ENCODE measurements at regions of chr12 and their contacts with region 1.

Region 1: DNA sequence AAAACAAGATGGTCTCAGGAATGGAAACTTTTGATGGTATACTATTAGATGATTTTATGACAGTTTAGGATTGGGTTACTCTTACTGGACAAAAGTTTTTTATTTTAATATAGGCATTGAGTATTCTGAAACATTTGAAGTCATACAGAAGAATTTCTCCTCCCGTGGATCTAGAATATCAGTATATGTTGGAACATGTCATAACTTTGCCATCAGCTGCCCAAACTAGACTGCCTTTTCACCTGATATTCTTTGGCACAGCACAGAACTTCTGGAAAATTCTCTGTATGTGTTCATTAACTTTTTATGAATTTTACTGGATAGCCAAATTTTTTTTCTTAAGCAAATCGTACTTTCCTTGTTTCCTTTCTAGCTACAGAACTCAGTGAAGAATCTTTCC is 75.4 kb downstream of the KNTC1 start:
- DNase-seq: no peak
- ATAC-seq: no peak
- H3K4me3 ChIP-seq: no peak overlapping the region
- H3K4me3 Mint-ChIP-seq: no peak overlapping the region
- H3K27ac ChIP-seq: no peak overlapping the region
- H3K27ac Mint-ChIP-seq: no peak overlapping the region
- H3K4me1 ChIP-seq: no peaks in the 10 kb centered on the region
- H3K4me1 Mint-ChIP-seq: no peaks in the 10 kb centered on the region
- H3K27me3 ChIP-seq: no peaks in the 10 kb centered on the region
- H3K27me3 Mint-ChIP-seq: no peaks in the 10 kb centered on the region

Region 2: DNA sequence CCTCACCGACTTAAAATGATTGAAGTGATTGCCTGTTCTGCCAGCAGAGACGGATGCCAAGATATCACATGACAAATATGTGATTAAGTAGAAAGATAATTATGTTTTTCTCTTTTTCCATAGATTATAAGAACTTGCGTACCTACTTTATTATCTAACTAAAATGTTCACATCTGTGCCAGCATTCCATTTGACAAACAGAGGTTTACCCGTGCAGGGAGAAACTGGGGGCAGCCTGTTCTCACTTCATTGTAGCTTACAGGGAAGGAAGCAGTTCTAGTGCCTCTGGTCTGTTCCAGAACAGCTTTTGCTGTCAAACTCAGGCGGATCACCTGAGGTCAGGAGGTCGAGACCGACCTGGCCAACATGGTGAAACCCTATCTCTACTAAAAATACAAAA is 201.5 kb after region 1 on chr12:
- CTCF ChIA-PET with region 1: no interaction called
- POLR2A ChIA-PET with region 1: interaction called in 1 of 2 experiments, 14 read pairs
- DNase-seq: no peak
- ATAC-seq: no peak
- H3K4me3 ChIP-seq: no peak overlapping the region
- H3K4me3 Mint-ChIP-seq: no peak overlapping the region
- H3K27ac ChIP-seq: no peak overlapping the region
- H3K27ac Mint-ChIP-seq: no peak overlapping the region
- H3K4me1 ChIP-seq: peaks cover 0 to 2% of the 10 kb centered on the region in 2 experiments
- H3K4me1 Mint-ChIP-seq: no peaks in the 10 kb centered on the region
- H3K27me3 ChIP-seq: no peaks in the 10 kb centered on the region
- H3K27me3 Mint-ChIP-seq: no peaks in the 10 kb centered on the region

Region 3: GRCh38 chr12:122895705-122896636 is 293.5 kb after region 1 on chr12 and contains the start of gene VPS37B:
- CTCF ChIA-PET with region 1: no interaction called
- POLR2A ChIA-PET with region 1: no interaction called
- DNase-seq: peak; percentile 68 to 95 (median 88)
- ATAC-seq: peak; percentile 55 to 77 (median 59)
- H3K4me3 ChIP-seq: peak within 1 kb of the TSS; percentile 76 to 81
- H3K4me3 Mint-ChIP-seq: peak within 1 kb of the TSS; percentile 90 to 94 (median 93)
- H3K27ac ChIP-seq: peak within 1 kb of the TSS; percentile 93
- H3K27ac Mint-ChIP-seq: peak within 1 kb of the TSS; percentile 90 to 92
- H3K4me1 ChIP-seq: peaks cover 41 to 78% of the 10 kb centered on the region in 2 experiments
- H3K4me1 Mint-ChIP-seq: peaks cover 90 to 94% (median 90%) of the 10 kb centered on the region in 3 donors
- H3K27me3 ChIP-seq: no peaks in the 10 kb centered on the region
- H3K27me3 Mint-ChIP-seq: no peaks in the 10 kb centered on the region
- total RNA-seq, gene VPS37B: 25.9 to 85.8 (median 34.6) TPM